Activated CD4-positive, alpha-beta T cell treated with anti-CD3 and anti-CD28 coated beads for 36 hours (primary cell): ENCODE measurements at regions of chr4 and their contacts with region 1.

Region 1: DNA sequence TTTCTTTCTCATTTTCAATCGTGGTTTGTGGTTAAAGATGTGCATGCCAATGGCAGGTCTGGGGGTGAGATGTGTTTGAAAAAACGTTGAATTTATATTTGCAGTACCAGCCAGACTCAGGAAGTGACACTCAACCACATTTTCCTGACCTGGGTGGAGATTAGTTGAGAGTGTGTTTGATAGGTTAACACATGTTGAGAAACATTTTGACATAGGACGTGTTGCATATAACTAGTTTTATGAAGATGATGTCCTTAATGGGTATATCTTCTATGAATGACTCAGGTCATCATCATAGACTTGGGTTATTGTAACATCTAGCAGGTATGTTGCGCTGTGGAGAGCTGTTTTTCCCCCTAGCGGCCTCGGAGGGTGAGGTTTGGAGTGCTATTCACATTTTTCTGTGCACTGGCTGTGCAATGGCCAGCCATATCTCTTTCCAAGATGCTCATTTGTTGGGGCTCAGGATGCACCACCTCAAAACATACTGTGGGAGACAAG is 21.7 kb upstream of the CD38 start:
- DNase-seq: peak; percentile 87
- ATAC-seq: peak; percentile 82
- H3K4me3 Mint-ChIP-seq: peak overlapping the region; percentile 60
- H3K27ac Mint-ChIP-seq: peak overlapping the region; percentile 96
- H3K4me1 Mint-ChIP-seq: peaks cover 45% of the 10 kb centered on the region
- H3K27me3 Mint-ChIP-seq: no peaks in the 10 kb centered on the region

Region 2: GRCh38 chr4:15655229-15656037 is 101.0 kb before region 1 on chr4 and contains the start of gene FBXL5:
- CTCF ChIA-PET with region 1: interaction called, 5 read pairs
- POLR2A ChIA-PET with region 1: no interaction called
- intact Hi-C with region 1: loop called (anchors 1 to 5 kb)
- DNase-seq: peak; percentile 90
- ATAC-seq: peak; percentile 76
- H3K4me3 Mint-ChIP-seq: peak within 1 kb of the TSS; percentile 99
- H3K27ac Mint-ChIP-seq: peak within 1 kb of the TSS; percentile 97
- H3K4me1 Mint-ChIP-seq: peaks cover 57% of the 10 kb centered on the region
- H3K27me3 Mint-ChIP-seq: no peaks in the 10 kb centered on the region
- total RNA-seq, gene FBXL5: 20.1 to 29.1 TPM

Region 3: GRCh38 chr4:15729910-15730533 is 26.4 kb before region 1 on chr4:
- CTCF ChIA-PET with region 1: interaction called, 10 read pairs
- POLR2A ChIA-PET with region 1: no interaction called
- intact Hi-C with region 1: loop called (anchors 1 kb)
- DNase-seq: peak; percentile 19
- ATAC-seq: peak; percentile 65
- H3K4me3 Mint-ChIP-seq: no peak overlapping the region
- H3K27ac Mint-ChIP-seq: no peak overlapping the region
- H3K4me1 Mint-ChIP-seq: peaks cover 7% of the 10 kb centered on the region
- H3K27me3 Mint-ChIP-seq: no peaks in the 10 kb centered on the region

Region 4: GRCh38 chr4:15771216-15772058 is 15.0 kb after region 1 on chr4:
- CTCF ChIA-PET with region 1: interaction called, 37 read pairs
- POLR2A ChIA-PET with region 1: interaction called, 8 read pairs
- intact Hi-C with region 1: loop called (anchors 1 kb)
- DNase-seq: peak; percentile 50
- ATAC-seq: peak; percentile 90
- H3K4me3 Mint-ChIP-seq: peak overlapping the region; percentile 22
- H3K27ac Mint-ChIP-seq: peak overlapping the region; percentile 83
- H3K4me1 Mint-ChIP-seq: peaks cover 67% of the 10 kb centered on the region
- H3K27me3 Mint-ChIP-seq: peaks cover 31% of the 10 kb centered on the region

Region 5: DNA sequence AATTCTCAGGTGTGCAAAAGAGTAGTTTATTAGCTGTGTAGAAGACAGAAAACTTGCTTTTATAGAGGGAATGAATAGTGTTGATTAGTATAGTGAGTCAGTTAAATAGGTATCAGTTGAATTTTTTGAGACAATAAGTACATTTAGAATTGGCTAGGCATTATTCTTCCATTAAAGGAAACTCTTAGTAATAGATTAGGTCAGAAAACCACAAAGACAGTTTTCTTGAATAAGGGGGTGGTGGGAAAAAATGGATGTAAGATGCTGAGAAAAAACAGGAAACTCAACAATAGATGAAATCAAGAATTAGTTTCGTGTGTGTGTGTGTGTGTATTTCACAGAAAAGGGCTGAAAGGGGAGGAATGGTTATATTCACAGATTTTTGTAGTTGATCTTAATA is 38.5 kb after region 1 on chr4:
- CTCF ChIA-PET with region 1: interaction called, 8 read pairs
- POLR2A ChIA-PET with region 1: no interaction called
- intact Hi-C with region 1: loop called (anchors 1 to 2 kb)
- DNase-seq: no peak
- ATAC-seq: peak; percentile 84
- H3K4me3 Mint-ChIP-seq: peak overlapping the region; percentile 47
- H3K27ac Mint-ChIP-seq: peak overlapping the region; percentile 58
- H3K4me1 Mint-ChIP-seq: peaks cover 46% of the 10 kb centered on the region
- H3K27me3 Mint-ChIP-seq: no peaks in the 10 kb centered on the region

Region 6: DNA sequence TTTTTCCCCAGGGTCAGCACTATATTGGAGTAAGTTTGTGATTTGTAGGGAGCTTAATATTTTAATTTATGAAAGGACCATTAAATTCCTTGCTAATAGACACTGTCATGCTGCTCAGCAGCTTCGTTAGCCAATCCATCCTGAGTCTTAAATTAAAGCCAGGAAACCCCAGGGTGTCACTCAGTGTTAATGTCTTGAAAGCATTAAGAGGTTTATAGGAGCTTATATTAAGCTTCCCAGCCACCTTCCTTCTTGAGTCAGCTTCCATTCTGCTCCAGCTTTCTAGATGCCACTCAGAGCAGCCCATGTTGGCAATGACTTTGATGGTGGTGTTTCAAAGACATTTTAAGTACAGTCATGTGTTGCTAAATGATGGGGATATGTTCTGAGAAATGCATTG is 354.5 kb after region 1 on chr4:
- CTCF ChIA-PET with region 1: no interaction called
- POLR2A ChIA-PET with region 1: no interaction called
- intact Hi-C with region 1: no loop called
- DNase-seq: no peak
- ATAC-seq: no peak
- H3K4me3 Mint-ChIP-seq: no peak overlapping the region
- H3K27ac Mint-ChIP-seq: no peak overlapping the region
- H3K4me1 Mint-ChIP-seq: no peaks in the 10 kb centered on the region
- H3K27me3 Mint-ChIP-seq: peaks cover 8% of the 10 kb centered on the region

Region 7: DNA sequence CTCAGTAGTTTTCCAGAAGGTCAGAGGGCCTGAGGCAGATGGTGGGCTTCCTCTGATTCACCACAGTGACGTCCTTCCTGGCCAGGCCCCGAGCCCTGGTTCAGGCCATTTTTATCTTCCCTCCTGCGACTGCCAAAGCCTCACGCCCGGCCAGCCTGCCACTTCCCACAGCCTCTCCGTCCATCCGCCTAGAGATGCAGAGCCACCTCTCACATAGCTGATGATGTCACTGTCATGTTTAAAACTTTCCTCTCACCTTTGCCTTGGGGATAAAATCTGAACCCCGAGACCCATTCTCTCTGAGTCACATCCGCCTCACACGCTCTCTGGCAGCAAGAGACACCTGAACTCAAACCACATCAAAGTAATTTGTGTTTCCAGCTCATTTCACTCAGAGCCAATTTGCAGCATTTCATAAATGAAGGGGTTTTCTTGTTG is 1580.1 kb after region 1 on chr4:
- CTCF ChIA-PET with region 1: no interaction called
- POLR2A ChIA-PET with region 1: no interaction called
- intact Hi-C with region 1: loop called in 1 of 2 experiments (anchors 1 kb)
- DNase-seq: peak; percentile 86
- ATAC-seq: peak; percentile 93
- H3K4me3 Mint-ChIP-seq: peak overlapping the region; percentile 54
- H3K27ac Mint-ChIP-seq: peak overlapping the region; percentile 92
- H3K4me1 Mint-ChIP-seq: peaks cover 45% of the 10 kb centered on the region
- H3K27me3 Mint-ChIP-seq: no peaks in the 10 kb centered on the region